CD4-positive, alpha-beta T cell (primary cell): ENCODE measurements at regions of chr9 and their contacts with region 1.

Region 1: DNA sequence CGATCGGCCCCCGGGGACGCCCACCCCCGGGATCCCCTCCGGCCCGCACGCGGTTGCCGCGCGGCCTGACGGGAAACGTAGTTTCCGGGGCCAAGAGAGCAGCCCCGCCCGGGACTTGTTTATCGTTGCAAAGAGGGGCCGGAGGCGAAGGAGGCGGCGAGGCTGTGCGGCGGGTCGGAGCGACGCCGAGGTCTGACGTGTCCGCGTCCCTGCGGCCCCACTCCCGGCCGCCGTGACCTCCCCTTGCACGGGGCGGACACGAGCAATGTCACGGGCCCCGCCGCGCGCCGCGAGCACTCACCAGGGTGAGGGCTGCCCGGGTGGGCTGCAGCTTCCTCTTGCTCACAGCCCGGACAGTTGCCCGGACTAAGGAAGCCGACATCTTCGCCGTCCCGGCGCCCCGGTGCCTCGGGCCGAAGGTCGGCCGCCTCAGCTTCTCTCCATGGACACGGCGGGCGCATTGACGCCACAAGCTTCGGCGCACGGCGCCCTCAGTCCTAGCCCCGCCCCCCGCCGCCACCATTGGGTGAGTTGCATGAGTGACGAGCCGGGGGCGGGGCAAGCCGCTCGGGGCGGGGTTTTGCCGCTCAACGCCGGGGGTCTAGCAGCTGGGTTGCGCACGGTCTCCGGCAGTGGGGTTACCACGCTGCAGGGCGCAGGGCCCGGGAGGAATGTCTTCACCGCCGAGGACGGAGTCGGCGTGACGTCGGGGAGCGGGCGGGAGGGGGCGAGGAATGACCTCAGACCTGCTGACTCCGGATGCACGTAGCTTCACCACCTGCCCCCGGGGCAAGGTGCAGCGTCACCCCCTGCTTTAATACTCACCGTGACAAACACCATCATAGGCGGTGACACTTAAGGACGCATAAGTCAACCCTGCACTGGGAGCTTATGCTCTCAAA is at the start of gene ISCA1:
- DNase-seq: peak; percentile 94 to 99 (median 98)
- ATAC-seq: peak; percentile 83
- H3K4me3 ChIP-seq: peak within 1 kb of the TSS; percentile 86
- H3K4me3 Mint-ChIP-seq: peak within 1 kb of the TSS; percentile 91
- H3K27ac ChIP-seq: peak within 1 kb of the TSS; percentile 94 to 95
- H3K27ac Mint-ChIP-seq: peak within 1 kb of the TSS; percentile 95
- H3K4me1 ChIP-seq: peaks cover 28% of the 10 kb centered on the region
- H3K4me1 Mint-ChIP-seq: peaks cover 47% of the 10 kb centered on the region
- H3K27me3 ChIP-seq: no peaks in the 10 kb centered on the region
- H3K27me3 Mint-ChIP-seq: no peaks in the 10 kb centered on the region
- CTCF ChIP-seq: no peak
- total RNA-seq, gene ISCA1: 85.3 to 91.6 TPM

Region 2: DNA sequence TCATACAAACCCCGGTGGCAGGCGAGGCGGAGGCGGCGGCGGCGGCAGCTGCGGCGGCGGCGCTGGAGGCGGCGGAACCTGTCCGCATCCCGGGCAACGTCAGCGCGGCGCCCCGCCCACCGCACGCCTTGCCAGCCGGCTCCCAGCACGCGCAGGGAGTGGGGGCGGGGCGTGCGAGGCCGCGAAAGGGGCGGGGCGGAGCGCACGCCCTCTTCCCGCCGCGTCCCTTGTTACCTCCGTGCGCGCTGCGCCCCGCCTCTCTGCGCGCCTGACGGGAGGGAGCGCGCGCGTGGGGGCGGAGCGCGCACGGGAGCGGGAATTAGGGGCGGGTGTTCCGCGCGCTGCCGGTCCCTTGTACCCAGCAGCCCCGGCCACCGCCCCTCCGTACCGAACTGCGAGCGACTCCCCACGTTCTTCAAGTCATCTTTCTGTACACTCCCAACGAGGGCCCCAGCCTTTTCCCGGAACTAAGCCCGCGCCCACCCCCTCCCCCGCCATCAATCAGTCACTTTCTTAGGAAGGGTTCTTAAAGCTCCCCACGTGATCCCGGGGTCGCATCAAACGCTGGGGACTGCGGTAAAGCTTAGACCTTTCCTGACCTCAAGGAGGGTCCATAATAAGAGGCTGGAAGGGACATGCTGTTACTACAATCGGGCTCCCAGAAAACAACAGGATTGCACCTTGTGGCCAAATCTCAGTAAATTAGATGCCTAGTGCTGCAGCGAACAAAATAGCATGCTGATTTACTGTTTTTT is 540.3 kb before region 1 on chr9 and contains the start of gene AGTPBP1:
- CTCF ChIA-PET with region 1: no interaction called
- POLR2A ChIA-PET with region 1: interaction called, 9 read pairs
- intact Hi-C with region 1: loop called (anchors 1 to 5 kb)
- DNase-seq: peak; percentile 92 to 100 (median 98)
- ATAC-seq: peak; percentile 81
- H3K4me3 ChIP-seq: peak within 1 kb of the TSS; percentile 89
- H3K4me3 Mint-ChIP-seq: peak within 1 kb of the TSS; percentile 97
- H3K27ac ChIP-seq: peak within 1 kb of the TSS; percentile 80 to 97
- H3K27ac Mint-ChIP-seq: peak within 1 kb of the TSS; percentile 93
- H3K4me1 ChIP-seq: peaks cover 18% of the 10 kb centered on the region
- H3K4me1 Mint-ChIP-seq: peaks cover 35% of the 10 kb centered on the region
- H3K27me3 ChIP-seq: no peaks in the 10 kb centered on the region
- H3K27me3 Mint-ChIP-seq: no peaks in the 10 kb centered on the region
- CTCF ChIP-seq: no peak
- total RNA-seq, gene AGTPBP1: 52.0 to 55.2 TPM

Region 3: DNA sequence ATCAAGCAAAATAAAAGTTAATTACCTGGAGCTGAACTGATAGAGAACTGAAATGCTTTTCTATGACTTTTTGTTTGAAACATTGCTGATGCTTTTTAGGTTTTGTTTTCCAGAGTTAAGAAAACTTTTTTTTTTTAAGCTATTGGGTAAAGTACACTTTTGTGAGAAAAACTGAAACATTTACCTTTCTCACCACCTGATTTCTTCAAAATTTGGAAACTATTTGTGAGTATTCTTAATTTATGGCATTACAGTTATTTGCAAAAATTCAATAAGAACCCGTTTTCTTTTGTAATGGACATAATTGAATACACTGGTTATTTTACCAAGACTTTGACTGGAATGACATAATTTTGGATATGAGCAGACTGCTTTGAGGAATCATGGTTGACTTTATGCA is 29.5 kb before region 1 on chr9:
- CTCF ChIA-PET with region 1: no interaction called
- POLR2A ChIA-PET with region 1: no interaction called
- intact Hi-C with region 1: no loop called
- DNase-seq: no peak
- ATAC-seq: no peak
- H3K4me3 ChIP-seq: no peak overlapping the region
- H3K4me3 Mint-ChIP-seq: no peak overlapping the region
- H3K27ac ChIP-seq: no peak overlapping the region
- H3K27ac Mint-ChIP-seq: no peak overlapping the region
- H3K4me1 ChIP-seq: no peaks in the 10 kb centered on the region
- H3K4me1 Mint-ChIP-seq: no peaks in the 10 kb centered on the region
- H3K27me3 ChIP-seq: no peaks in the 10 kb centered on the region
- H3K27me3 Mint-ChIP-seq: no peaks in the 10 kb centered on the region
- CTCF ChIP-seq: no peak

Region 4: GRCh38 chr9:86303316-86303975 is 21.1 kb after region 1 on chr9:
- CTCF ChIA-PET with region 1: no interaction called
- POLR2A ChIA-PET with region 1: interaction called, 8 read pairs
- intact Hi-C with region 1: loop called (anchors 2 kb)
- DNase-seq: peak in 11 of 14 experiments; percentile 10 to 66 (median 34)
- ATAC-seq: peak; percentile 97
- H3K4me3 ChIP-seq: no peak overlapping the region
- H3K4me3 Mint-ChIP-seq: no peak overlapping the region
- H3K27ac ChIP-seq: no peak overlapping the region
- H3K27ac Mint-ChIP-seq: peak overlapping the region; percentile 63
- H3K4me1 ChIP-seq: peaks cover 9% of the 10 kb centered on the region
- H3K4me1 Mint-ChIP-seq: peaks cover 31% of the 10 kb centered on the region
- H3K27me3 ChIP-seq: no peaks in the 10 kb centered on the region
- H3K27me3 Mint-ChIP-seq: no peaks in the 10 kb centered on the region
- CTCF ChIP-seq: no peak

Region 5: GRCh38 chr9:86354011-86354817 is 71.9 kb after region 1 on chr9 and contains the start of gene TUT7:
- CTCF ChIA-PET with region 1: no interaction called
- POLR2A ChIA-PET with region 1: interaction called, 10 read pairs
- intact Hi-C with region 1: loop called (anchors 2 kb)
- DNase-seq: peak; percentile 81 to 96 (median 92)
- ATAC-seq: peak; percentile 91
- H3K4me3 ChIP-seq: peak within 1 kb of the TSS; percentile 96
- H3K4me3 Mint-ChIP-seq: peak within 1 kb of the TSS; percentile 99
- H3K27ac ChIP-seq: peak within 1 kb of the TSS; percentile 75 to 82
- H3K27ac Mint-ChIP-seq: peak within 1 kb of the TSS; percentile 83
- H3K4me1 ChIP-seq: peaks cover 26% of the 10 kb centered on the region
- H3K4me1 Mint-ChIP-seq: peaks cover 51% of the 10 kb centered on the region
- H3K27me3 ChIP-seq: no peaks in the 10 kb centered on the region
- H3K27me3 Mint-ChIP-seq: no peaks in the 10 kb centered on the region
- CTCF ChIP-seq: no peak
- total RNA-seq, gene TUT7: 51.9 to 53.8 TPM

Region 6: DNA sequence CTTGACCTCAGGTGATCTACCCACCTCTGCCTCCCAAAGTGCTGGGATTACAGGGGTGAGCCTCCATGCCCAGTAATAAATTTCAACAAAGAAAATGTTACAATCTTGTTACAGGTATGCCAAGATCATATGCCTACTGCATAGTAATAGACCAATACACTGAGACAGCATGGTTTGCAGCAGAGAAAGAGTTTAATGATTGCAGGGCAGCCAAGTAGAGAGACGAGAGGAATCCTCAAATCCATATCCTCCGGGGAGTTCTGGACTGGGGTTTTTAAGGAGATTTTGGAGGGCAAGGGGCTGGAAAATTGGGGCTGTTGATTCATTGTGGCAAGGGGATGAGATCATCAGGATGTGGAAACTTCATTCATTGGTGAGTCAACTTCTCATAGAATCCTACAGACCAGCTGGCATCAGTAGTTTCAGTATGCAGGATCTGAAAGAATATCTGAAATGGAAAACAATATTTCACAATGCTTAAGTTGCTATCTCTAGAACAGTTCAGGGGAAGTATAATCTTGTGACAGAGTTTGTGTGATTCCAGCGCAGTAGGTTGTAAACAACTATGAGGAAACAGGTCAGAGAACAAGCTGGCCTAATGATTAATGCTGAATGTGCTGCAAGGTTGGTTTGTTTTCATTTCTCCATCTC is 86.7 kb after region 1 on chr9:
- CTCF ChIA-PET with region 1: no interaction called
- POLR2A ChIA-PET with region 1: no interaction called
- intact Hi-C with region 1: no loop called
- DNase-seq: peak in 2 of 14 experiments; percentile 53 to 64
- ATAC-seq: no peak
- H3K4me3 ChIP-seq: no peak overlapping the region
- H3K4me3 Mint-ChIP-seq: no peak overlapping the region
- H3K27ac ChIP-seq: no peak overlapping the region
- H3K27ac Mint-ChIP-seq: no peak overlapping the region
- H3K4me1 ChIP-seq: no peaks in the 10 kb centered on the region
- H3K4me1 Mint-ChIP-seq: no peaks in the 10 kb centered on the region
- H3K27me3 ChIP-seq: peaks cover 0 to 6% of the 10 kb centered on the region in 2 experiments
- H3K27me3 Mint-ChIP-seq: peaks cover 31% of the 10 kb centered on the region
- CTCF ChIP-seq: no peak

Region 7: GRCh38 chr9:87973730-87974292 is 1691.5 kb after region 1 on chr9:
- CTCF ChIA-PET with region 1: no interaction called
- POLR2A ChIA-PET with region 1: no interaction called
- intact Hi-C with region 1: loop called in 1 of 2 experiments (anchors 10 kb)
- DNase-seq: peak in 1 of 14 experiments; percentile 12
- ATAC-seq: no peak
- H3K4me3 ChIP-seq: peak overlapping the region; percentile 66
- H3K4me3 Mint-ChIP-seq: peak overlapping the region; percentile 93
- H3K27ac ChIP-seq: peak overlapping the region; percentile 75 to 90
- H3K27ac Mint-ChIP-seq: peak overlapping the region; percentile 96
- H3K4me1 ChIP-seq: peaks cover 17% of the 10 kb centered on the region
- H3K4me1 Mint-ChIP-seq: peaks cover 38% of the 10 kb centered on the region
- H3K27me3 ChIP-seq: no peaks in the 10 kb centered on the region
- H3K27me3 Mint-ChIP-seq: no peaks in the 10 kb centered on the region
- CTCF ChIP-seq: no peak